Endothelial cell of umbilical vein (primary cell): ENCODE measurements at regions of chr4 and their contacts with region 1.

Region 1: DNA sequence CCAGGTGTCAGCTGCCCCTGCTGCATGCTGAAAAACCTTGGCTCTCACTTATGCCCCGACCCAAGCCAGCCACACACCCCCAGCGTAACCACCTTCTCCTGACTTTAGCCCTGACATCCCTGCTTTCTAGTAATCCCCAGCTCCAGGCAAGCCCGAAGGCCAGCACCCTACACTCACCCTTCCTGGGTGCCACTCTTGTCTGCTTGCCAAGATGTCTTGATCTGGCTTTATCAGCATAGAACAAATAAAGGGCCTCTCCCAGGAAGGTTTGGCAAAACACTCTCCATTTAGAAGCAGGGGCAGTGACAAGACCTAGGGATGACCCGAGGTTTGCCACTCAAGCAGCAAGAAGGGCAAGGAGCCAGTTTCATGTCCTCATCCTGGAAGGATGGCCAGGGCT is 6.8 kb upstream of the MAP9 start:
- DNase-seq: no peak
- H3K4me3 ChIP-seq: no peak overlapping the region
- H3K27ac ChIP-seq: no peak overlapping the region
- H3K4me1 ChIP-seq: no peaks in the 10 kb centered on the region
- H3K27me3 ChIP-seq: no peaks in the 10 kb centered on the region
- CTCF ChIP-seq: no peak
- POLR2A ChIP-seq: no peak

Region 2: DNA sequence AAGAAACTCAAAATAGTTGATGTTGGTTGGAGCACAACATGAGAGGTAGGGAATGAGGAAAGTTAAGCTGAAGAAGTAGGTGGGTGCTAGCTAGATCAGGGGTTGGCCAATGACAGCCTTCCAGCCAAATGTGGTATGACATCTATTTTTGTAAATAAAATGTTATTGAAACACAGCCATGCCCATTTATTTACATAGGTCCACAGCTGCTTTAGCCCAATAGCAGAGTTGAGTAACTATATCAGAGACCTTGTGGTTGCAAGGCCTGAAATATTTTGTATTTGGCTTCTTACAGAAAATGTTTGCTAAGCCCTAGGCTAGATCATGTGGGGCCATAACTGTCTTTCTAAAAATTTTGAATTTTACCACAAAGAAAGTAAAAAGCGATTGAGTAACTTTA is 805.1 kb after region 1 on chr4:
- CTCF ChIA-PET with region 1: no interaction called
- POLR2A ChIA-PET with region 1: interaction called, 10 read pairs
- dilution Hi-C with region 1: no loop called
- intact Hi-C with region 1: no loop called
- DNase-seq: no peak
- H3K4me3 ChIP-seq: no peak overlapping the region
- H3K27ac ChIP-seq: no peak overlapping the region
- H3K4me1 ChIP-seq: no peaks in the 10 kb centered on the region
- H3K27me3 ChIP-seq: no peaks in the 10 kb centered on the region
- CTCF ChIP-seq: no peak
- POLR2A ChIP-seq: no peak